ENCODE measurements at regions of chr17 and their contacts with region 1.

Region 1: DNA sequence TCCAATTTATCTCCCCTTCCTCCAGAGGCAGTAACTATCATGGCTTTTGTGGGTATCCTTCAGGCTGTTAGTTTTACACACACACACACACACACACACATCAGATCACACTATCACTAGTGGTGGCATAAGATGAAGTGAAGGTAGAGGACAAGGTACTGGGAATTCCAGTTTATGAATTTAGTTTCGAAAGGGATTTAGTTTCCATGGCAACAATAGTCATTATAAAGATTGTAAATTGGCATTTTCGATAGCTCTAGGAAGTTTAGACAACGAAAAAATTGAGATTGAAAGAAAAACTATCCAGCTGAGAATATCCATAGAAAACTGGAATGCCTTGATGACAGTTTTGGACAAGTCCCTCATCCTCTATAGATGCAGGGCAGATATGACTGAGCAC is 30.8 kb downstream of the SLFN5 start:
- DNase-seq: no peak
- ATAC-seq: no peak
- H3K4me3 ChIP-seq: no peak overlapping the region
- H3K4me3 Mint-ChIP-seq: peak overlapping the region in 2 of 10 donors; percentile 22 to 60
- H3K27ac ChIP-seq: peak overlapping the region; percentile 3
- H3K27ac Mint-ChIP-seq: peak overlapping the region in 7 of 9 donors; percentile 10 to 91 (median 86)
- H3K4me1 ChIP-seq: peaks cover 0 to 15% of the 10 kb centered on the region in 2 donors
- H3K4me1 Mint-ChIP-seq: peaks cover 19 to 80% (median 66%) of the 10 kb centered on the region in 7 donors
- H3K27me3 ChIP-seq: no peaks in the 10 kb centered on the region
- H3K27me3 Mint-ChIP-seq: peaks cover 0 to 16% (median 0%) of the 10 kb centered on the region in 5 donors

Region 2: GRCh38 chr17:35069311-35069710 is 204.4 kb before region 1 on chr17:
- CTCF ChIA-PET with region 1: no interaction called
- POLR2A ChIA-PET with region 1: no interaction called
- intact Hi-C with region 1: no loop called
- DNase-seq: no peak
- ATAC-seq: no peak
- H3K4me3 ChIP-seq: no peak overlapping the region
- H3K4me3 Mint-ChIP-seq: peak overlapping the region in 1 of 10 donors; percentile 11
- H3K27ac ChIP-seq: no peak overlapping the region
- H3K27ac Mint-ChIP-seq: peak overlapping the region in 2 of 9 donors; percentile 5 to 76
- H3K4me1 ChIP-seq: peaks cover 31 to 46% of the 10 kb centered on the region in 2 donors
- H3K4me1 Mint-ChIP-seq: peaks cover 44 to 84% (median 72%) of the 10 kb centered on the region in 7 donors
- H3K27me3 ChIP-seq: no peaks in the 10 kb centered on the region
- H3K27me3 Mint-ChIP-seq: no peaks in the 10 kb centered on the region

Region 3: GRCh38 chr17:35286120-35286781 is 12.6 kb after region 1 on chr17:
- CTCF ChIA-PET with region 1: interaction called, 3 read pairs
- POLR2A ChIA-PET with region 1: interaction called, 13 read pairs
- intact Hi-C with region 1: no loop called
- DNase-seq: peak in 7 of 9 donors; percentile 31 to 65 (median 56)
- ATAC-seq: peak; percentile 92
- H3K4me3 ChIP-seq: peak overlapping the region; percentile 11
- H3K4me3 Mint-ChIP-seq: peak overlapping the region in 9 of 10 donors; percentile 7 to 77 (median 60)
- H3K27ac ChIP-seq: peak overlapping the region; percentile 67
- H3K27ac Mint-ChIP-seq: peak overlapping the region; percentile 10 to 97 (median 88)
- H3K4me1 ChIP-seq: peaks cover 4 to 21% of the 10 kb centered on the region in 2 donors
- H3K4me1 Mint-ChIP-seq: peaks cover 28 to 61% (median 56%) of the 10 kb centered on the region in 7 donors
- H3K27me3 ChIP-seq: no peaks in the 10 kb centered on the region
- H3K27me3 Mint-ChIP-seq: peaks cover 0 to 19% (median 0%) of the 10 kb centered on the region in 5 donors